GM12878 (cell line): ENCODE measurements at regions of chr11 and their contacts with region 1.

Region 1: DNA sequence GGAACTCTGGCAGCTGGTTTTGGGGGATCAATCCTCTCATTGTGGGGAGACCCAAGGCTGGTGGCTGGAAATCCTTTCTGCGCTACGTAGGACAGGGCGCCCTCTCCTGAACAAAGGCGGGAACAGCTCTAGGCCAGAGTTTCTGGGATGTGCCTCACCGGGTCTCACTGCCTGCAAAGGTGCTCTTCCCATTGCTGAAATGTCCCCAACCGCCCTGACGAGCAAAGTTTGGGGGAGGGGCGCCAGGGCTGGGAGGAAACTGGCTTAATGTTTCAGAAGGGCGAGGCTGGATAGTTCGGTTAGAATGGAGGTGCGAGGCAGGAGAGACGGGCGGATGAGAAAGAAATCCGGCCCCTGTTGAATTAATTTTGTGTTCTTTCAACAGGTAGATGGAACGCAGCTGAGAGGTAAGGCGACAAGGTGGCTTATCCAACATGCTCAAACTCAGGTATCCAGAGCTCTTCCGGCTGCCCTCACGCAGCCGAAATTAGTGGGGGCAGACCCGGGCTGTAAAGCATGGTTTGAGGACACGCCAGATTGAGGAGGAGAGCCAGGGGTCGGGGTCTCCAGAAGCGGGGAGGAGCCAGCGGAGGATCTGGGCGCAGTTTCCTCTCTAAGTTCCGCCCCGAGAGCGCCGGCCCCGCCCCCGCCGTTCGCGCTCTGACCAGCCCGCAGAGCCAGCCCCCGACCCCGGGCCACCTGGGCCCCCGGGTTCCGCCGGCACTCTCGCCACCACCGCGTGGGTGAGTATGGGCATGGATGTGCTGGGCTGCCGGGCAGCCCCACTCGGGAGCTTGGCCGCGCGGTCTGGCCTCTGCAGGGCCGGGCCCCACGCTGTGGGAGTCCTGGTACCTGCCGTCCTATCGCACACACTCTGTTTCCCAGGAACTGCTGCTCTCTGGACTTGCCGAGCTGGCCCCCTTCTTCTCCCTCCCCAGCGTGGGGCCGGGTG is at the start of gene PGAP2:
- DNase-seq: no peak
- ATAC-seq: peak; percentile 89
- H3K4me3 ChIP-seq: peak within 1 kb of the TSS; percentile 92
- H3K27ac ChIP-seq: peak within 1 kb of the TSS; percentile 57
- H3K4me1 ChIP-seq: no peaks in the 10 kb centered on the region
- H3K27me3 ChIP-seq: no peaks in the 10 kb centered on the region
- CTCF ChIP-seq: peak; percentile 71 to 75 (median 73)
- EP300 ChIP-seq: no peak
- POLR2A ChIP-seq: peak; percentile 46; the same call in 1 of the 2 replicates
- RAD21 ChIP-seq: peak; percentile 62
- polyA plus RNA-seq, gene PGAP2: 25.4 to 37.4 TPM

Region 2: GRCh38 chr11:3775736-3776406 is 32.3 kb before region 1 on chr11:
- CTCF ChIA-PET with region 1: interaction called, 31 read pairs
- POLR2A ChIA-PET with region 1: no interaction called
- RAD21 ChIA-PET with region 1: no interaction called
- SMC1A ChIA-PET with region 1: interaction called, 28 read pairs
- in situ Hi-C with region 1: no loop called
- intact Hi-C with region 1: no loop called
- DNase-seq: no peak
- ATAC-seq: no peak
- H3K4me3 ChIP-seq: no peak overlapping the region
- H3K27ac ChIP-seq: no peak overlapping the region
- H3K4me1 ChIP-seq: no peaks in the 10 kb centered on the region
- H3K27me3 ChIP-seq: no peaks in the 10 kb centered on the region
- CTCF ChIP-seq: no peak
- EP300 ChIP-seq: no peak
- POLR2A ChIP-seq: no peak
- RAD21 ChIP-seq: no peak

Region 3: DNA sequence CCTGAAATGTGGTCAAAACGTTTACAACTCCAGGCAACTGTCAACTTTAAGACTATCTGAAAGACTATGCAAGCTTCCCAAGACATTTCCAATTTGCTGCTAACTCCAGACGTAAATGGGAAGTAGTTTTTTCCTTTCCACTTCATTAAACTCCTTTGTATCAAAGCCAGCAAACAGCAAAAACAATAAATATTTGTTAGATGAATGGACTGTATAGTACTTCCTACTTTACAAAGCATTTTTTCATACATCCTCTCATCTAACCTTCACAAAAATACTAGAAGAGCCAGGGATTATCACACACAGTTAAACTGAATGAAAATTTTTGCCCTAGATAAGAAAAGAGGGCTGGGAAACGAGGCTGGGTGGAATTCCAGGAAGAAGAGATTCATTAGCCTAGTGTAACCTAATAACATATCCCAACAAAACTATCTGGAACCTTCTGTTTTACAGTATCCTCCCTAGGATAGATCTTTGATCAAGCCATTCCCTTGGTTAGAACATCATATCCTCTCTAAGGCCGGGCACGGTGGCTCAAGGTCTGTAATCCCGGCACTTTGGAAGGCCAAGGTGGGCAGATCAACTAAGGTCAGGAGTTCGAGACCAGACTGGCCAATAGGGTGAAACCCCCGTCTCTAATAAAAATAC is 21.3 kb before region 1 on chr11:
- CTCF ChIA-PET with region 1: interaction called, 44 read pairs
- POLR2A ChIA-PET with region 1: interaction called, 4 read pairs
- RAD21 ChIA-PET with region 1: interaction called, 25 read pairs
- SMC1A ChIA-PET with region 1: interaction called, 28 read pairs
- in situ Hi-C with region 1: no loop called
- intact Hi-C with region 1: no loop called
- DNase-seq: no peak
- ATAC-seq: no peak
- H3K4me3 ChIP-seq: no peak overlapping the region
- H3K27ac ChIP-seq: no peak overlapping the region
- H3K4me1 ChIP-seq: peaks cover 12% of the 10 kb centered on the region
- H3K27me3 ChIP-seq: no peaks in the 10 kb centered on the region
- CTCF ChIP-seq: no peak
- EP300 ChIP-seq: no peak
- POLR2A ChIP-seq: no peak
- RAD21 ChIP-seq: no peak

Region 4: DNA sequence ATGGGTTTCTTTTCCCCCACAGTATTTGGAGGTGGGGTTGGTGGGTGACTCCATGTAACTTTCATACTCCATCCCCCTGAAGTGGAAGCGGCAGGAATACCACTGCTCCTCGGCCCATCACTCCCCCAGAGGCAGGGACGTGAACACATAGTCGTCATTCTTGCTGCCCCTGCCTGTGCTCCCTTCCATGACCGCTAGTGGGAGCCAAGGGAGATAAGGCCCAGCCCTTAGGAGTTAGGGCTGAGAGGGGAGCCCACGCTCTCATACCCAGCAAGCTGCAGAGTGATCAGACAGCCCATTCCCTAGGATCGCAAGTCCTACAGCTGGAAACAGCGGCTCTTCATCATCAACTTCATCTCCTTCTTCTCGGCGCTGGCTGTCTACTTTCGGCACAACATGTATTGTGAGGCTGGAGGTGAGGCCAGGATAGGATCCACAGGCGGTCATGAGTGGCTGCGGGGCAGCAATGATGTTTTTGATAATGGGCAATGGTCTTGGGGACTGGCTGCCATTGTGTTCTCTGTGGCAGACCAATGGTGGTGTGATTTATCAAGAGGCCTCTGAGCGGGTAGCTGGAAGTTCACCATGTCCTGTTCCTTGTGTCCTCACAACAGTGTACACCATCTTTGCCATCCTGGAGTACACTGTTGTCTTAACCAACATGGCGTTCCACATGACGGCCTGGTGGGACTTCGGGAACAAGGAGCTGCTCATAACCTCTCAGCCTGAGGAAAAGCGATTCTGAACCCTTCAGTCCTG is 16.7 kb after region 1 on chr11:
- CTCF ChIA-PET with region 1: interaction called, 33 read pairs
- POLR2A ChIA-PET with region 1: no interaction called
- RAD21 ChIA-PET with region 1: interaction called, 7 read pairs
- SMC1A ChIA-PET with region 1: interaction called, 10 read pairs
- in situ Hi-C with region 1: no loop called
- intact Hi-C with region 1: no loop called
- DNase-seq: no peak
- ATAC-seq: peak; percentile 97
- H3K4me3 ChIP-seq: no peak overlapping the region
- H3K27ac ChIP-seq: no peak overlapping the region
- H3K4me1 ChIP-seq: peaks cover 2% of the 10 kb centered on the region; the same call in 1 of the 2 replicates
- H3K27me3 ChIP-seq: no peaks in the 10 kb centered on the region
- CTCF ChIP-seq: peak; percentile 83 to 97 (median 96)
- EP300 ChIP-seq: no peak
- POLR2A ChIP-seq: peak; percentile 12; the same call in 1 of the 2 replicates
- RAD21 ChIP-seq: peak; percentile 75

Region 5: DNA sequence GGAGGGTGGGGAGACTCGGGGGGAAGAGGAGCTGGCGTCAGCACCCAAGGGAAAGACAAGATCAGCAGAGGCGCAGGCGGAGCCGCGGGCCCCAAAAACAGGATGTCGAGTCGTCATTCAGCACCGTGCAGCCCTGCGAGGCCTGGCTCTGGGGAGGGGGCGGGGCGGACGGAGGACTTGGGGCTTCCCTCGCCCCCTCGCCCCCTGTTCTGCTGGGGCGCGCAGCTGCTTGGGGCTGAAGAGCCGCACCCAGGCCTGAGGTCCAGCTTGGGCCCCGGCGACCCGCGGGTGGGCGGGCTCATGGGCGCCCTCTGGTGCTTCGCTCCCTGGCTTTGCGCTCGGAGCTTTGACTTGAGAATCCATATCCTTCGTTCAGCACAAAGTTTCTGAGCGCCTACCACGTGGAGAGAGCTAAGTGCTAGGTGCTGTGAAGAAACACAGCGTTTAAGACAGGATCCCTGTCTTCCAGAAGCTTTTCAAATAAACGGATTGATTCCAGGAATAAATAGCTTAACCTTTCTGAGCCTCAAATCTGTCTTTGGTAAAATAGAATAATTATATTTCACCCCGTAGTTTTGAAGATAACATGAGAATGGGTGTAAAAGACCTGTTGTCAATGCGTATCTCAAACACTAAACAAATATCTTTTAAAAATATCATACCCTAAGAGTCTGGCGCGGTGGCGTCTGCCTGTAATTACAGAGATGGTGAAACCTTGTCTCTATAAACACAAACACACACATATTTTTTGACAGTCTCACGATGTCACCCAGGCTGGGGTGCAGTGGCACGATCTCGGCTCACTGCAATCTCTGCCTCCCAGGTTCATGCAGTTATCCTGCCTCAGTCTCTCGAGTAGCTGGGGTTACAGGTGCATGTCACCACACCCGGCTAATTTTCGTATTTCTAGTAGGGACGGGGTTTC is 33.5 kb after region 1 on chr11:
- CTCF ChIA-PET with region 1: interaction called, 21 read pairs
- POLR2A ChIA-PET with region 1: interaction called, 9 read pairs
- RAD21 ChIA-PET with region 1: interaction called, 20 read pairs
- SMC1A ChIA-PET with region 1: interaction called, 33 read pairs
- in situ Hi-C with region 1: no loop called
- intact Hi-C with region 1: no loop called
- DNase-seq: peak; percentile 79
- ATAC-seq: peak; percentile 71
- H3K4me3 ChIP-seq: peak overlapping the region; percentile 98
- H3K27ac ChIP-seq: peak overlapping the region; percentile 82
- H3K4me1 ChIP-seq: peaks cover 15% of the 10 kb centered on the region
- H3K27me3 ChIP-seq: no peaks in the 10 kb centered on the region
- CTCF ChIP-seq: peak; percentile 78 to 88 (median 85)
- EP300 ChIP-seq: no peak
- POLR2A ChIP-seq: peak; percentile 71
- RAD21 ChIP-seq: peak; percentile 54